ENCODE measurements at regions of chr17 and their contacts with region 1.

Region 1: DNA sequence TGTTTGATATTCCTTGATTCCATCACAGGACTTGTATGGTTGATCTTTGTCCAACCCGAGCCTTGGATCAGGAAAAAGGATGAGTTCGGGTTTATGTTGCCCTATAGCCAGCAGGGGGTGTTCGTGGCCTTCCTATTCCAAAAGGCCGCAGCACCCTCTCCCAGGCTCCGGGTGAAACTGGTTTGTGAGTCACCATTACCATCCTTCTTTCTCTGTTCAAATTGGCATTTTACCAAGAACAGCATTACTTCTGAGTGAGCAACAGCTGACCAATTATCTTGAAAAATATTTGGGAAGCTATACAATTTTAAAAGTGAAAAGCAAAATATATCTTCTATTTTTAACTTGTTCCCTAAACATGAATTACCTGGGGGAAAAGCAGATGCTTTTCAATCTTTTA is 24.3 kb upstream of the KRT20 start:
- DNase-seq: peak; percentile 82

Region 2: GRCh38 chr17:40952661-40953060 is 43.3 kb after region 1 on chr17:
- intact Hi-C with region 1: no loop called
- DNase-seq: no peak

Region 3: DNA sequence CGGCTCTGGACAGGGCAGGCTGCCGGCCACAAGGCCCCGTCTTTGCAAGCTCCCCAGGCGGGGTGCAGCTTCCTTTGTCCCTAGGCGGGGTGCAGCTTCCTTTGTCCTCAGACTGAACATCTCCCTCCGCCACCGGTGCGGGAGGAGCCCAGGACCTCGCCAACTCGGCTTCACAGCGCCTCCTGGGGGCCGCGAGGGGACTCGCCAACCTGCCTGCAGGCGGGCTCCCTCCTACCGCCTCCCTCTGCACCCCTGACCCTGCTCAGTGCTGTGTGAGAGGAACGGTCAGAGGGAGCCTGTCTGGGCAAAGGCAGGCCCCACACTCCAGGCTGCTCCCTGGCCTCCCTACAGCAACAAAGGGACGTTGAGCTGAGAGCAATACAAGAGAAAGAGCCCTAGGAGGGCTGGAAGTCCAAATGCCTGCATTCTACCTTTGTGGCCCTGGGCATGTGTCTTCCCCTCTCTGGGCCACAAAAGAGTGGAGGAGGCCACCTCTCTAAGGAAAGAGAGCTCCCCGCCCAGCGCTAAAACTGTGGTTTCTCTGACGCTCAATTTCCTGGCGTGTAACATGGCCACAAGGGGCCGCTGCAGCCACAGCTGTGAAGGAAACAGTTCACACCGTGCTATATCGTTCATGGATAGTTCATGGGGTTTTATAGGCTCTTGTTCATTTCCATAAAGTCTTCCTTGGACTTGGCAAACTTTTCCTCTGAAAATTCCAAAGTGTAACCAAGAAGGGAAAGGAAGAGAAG is 639.7 kb after region 1 on chr17:
- intact Hi-C with region 1: loop called (anchors 2 kb)
- DNase-seq: peak; percentile 94